T-cell (primary cell): ENCODE measurements at regions of chr22 and their contacts with region 1.

Region 1: DNA sequence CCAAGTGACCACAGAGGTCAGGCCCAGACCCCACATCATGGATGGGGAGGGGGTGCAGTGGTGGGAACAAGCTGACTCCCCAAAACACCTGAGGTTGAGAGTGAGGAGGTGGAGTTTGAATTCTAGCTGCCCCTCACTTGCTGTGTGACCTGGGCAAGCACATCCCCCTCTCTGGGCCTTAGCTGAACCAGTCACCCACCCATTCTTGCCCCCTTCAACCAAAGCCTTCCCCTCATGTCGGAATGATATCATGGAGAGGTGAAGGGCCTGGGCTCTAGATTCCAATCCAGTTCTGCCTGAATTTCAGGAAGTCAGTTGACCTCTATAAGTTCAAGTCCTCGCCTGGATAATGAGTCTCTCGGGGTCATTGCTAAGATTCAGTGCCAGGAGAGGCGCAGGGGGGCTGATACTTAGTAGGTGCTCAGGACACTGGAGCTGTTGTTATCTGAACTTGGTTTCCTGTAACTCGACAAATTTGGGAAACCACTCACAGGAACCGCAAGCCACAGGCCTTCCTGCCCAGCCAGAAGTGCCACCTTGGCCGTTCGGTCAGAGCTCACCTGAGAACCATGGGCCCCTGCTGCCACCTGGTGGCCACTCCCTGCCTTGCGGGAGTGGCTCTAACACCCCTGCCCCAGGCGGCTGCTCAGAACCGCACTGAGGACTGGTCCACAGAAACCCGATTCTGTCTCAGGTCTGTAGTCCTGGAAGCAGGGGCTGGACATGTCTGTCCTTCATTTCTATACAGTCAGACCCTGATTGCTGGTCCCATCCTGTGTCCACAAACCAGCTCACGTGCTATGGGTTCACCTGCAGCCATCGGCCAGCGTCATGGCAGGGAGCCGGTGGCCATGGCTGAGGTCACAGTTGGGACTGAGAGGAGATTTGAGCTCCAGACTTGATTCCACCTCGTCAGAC is 6.9 kb downstream of the CDC42EP1 start:
- DNase-seq: peak; percentile 68 to 93 (median 84)
- ATAC-seq: peak; percentile 87 to 93 (median 89)
- H3K4me3 ChIP-seq: peak overlapping the region in 1 of 2 donors; percentile 32
- H3K4me3 Mint-ChIP-seq: peak overlapping the region; percentile 41 to 70 (median 51)
- H3K27ac ChIP-seq: no peak overlapping the region
- H3K27ac Mint-ChIP-seq: peak overlapping the region; percentile 16 to 19
- H3K4me1 ChIP-seq: peaks cover 13 to 29% of the 10 kb centered on the region in 2 experiments
- H3K4me1 Mint-ChIP-seq: peaks cover 19 to 25% (median 24%) of the 10 kb centered on the region in 3 donors
- H3K27me3 ChIP-seq: peaks cover 0 to 65% of the 10 kb centered on the region in 2 experiments
- H3K27me3 Mint-ChIP-seq: peaks cover 6 to 25% of the 10 kb centered on the region in 2 donors

Region 2: GRCh38 chr22:37472418-37473006 is 94.7 kb before region 1 on chr22:
- CTCF ChIA-PET with region 1: interaction called, 8 to 11 read pairs
- POLR2A ChIA-PET with region 1: no interaction called
- DNase-seq: peak in 26 of 35 experiments; percentile 7 to 67 (median 32)
- ATAC-seq: peak; percentile 52 to 64 (median 55)
- H3K4me3 ChIP-seq: no peak overlapping the region
- H3K4me3 Mint-ChIP-seq: no peak overlapping the region
- H3K27ac ChIP-seq: no peak overlapping the region
- H3K27ac Mint-ChIP-seq: peak overlapping the region in 1 of 2 donors; percentile 19
- H3K4me1 ChIP-seq: peaks cover 0 to 4% of the 10 kb centered on the region in 2 experiments
- H3K4me1 Mint-ChIP-seq: peaks cover 8 to 16% (median 15%) of the 10 kb centered on the region in 3 donors
- H3K27me3 ChIP-seq: no peaks in the 10 kb centered on the region
- H3K27me3 Mint-ChIP-seq: no peaks in the 10 kb centered on the region

Region 3: GRCh38 chr22:37538590-37539357 is 28.4 kb before region 1 on chr22:
- CTCF ChIA-PET with region 1: interaction called, 9 to 59 read pairs
- POLR2A ChIA-PET with region 1: interaction called in 1 of 2 experiments, 4 read pairs
- DNase-seq: peak; percentile 75 to 93 (median 85)
- ATAC-seq: peak; percentile 99 to 100 (median 100)
- H3K4me3 ChIP-seq: no peak overlapping the region
- H3K4me3 Mint-ChIP-seq: peak overlapping the region in 1 of 3 donors; percentile 63
- H3K27ac ChIP-seq: no peak overlapping the region
- H3K27ac Mint-ChIP-seq: peak overlapping the region in 1 of 2 donors; percentile 69
- H3K4me1 ChIP-seq: peaks cover 0 to 24% of the 10 kb centered on the region in 2 experiments
- H3K4me1 Mint-ChIP-seq: peaks cover 16 to 39% (median 30%) of the 10 kb centered on the region in 3 donors
- H3K27me3 ChIP-seq: peaks cover 0 to 37% of the 10 kb centered on the region in 2 experiments
- H3K27me3 Mint-ChIP-seq: peaks cover 14 to 25% of the 10 kb centered on the region in 2 donors

Region 4: DNA sequence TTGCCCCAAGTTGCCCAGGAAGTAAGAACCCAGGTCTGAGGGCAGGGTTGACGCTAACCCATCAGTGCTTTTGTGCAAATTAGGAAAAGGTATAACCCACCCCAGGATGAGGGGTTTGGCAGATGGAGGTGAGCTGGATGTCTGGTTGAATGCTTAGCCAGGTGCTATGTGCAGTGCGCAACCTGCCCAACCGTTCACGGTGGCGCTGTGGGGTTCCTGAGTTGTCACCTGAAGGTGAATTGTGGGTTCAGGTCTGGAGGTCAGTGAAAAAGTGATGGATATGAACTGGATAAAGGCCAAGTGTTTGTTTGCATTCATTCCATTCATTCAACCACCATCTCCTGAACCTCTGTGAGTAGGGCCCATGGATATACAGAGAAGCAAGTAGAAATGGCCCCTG is 27.1 kb after region 1 on chr22:
- CTCF ChIA-PET with region 1: interaction called, 8 to 36 read pairs
- POLR2A ChIA-PET with region 1: interaction called in 1 of 2 experiments, 7 read pairs
- DNase-seq: no peak
- ATAC-seq: no peak
- H3K4me3 ChIP-seq: no peak overlapping the region
- H3K4me3 Mint-ChIP-seq: no peak overlapping the region
- H3K27ac ChIP-seq: no peak overlapping the region
- H3K27ac Mint-ChIP-seq: no peak overlapping the region
- H3K4me1 ChIP-seq: peaks cover 0 to 6% of the 10 kb centered on the region in 2 experiments
- H3K4me1 Mint-ChIP-seq: peaks cover 12 to 13% (median 12%) of the 10 kb centered on the region in 3 donors
- H3K27me3 ChIP-seq: peaks cover 0 to 5% of the 10 kb centered on the region in 2 experiments
- H3K27me3 Mint-ChIP-seq: peaks cover 0 to 2% of the 10 kb centered on the region in 2 donors

Region 5: DNA sequence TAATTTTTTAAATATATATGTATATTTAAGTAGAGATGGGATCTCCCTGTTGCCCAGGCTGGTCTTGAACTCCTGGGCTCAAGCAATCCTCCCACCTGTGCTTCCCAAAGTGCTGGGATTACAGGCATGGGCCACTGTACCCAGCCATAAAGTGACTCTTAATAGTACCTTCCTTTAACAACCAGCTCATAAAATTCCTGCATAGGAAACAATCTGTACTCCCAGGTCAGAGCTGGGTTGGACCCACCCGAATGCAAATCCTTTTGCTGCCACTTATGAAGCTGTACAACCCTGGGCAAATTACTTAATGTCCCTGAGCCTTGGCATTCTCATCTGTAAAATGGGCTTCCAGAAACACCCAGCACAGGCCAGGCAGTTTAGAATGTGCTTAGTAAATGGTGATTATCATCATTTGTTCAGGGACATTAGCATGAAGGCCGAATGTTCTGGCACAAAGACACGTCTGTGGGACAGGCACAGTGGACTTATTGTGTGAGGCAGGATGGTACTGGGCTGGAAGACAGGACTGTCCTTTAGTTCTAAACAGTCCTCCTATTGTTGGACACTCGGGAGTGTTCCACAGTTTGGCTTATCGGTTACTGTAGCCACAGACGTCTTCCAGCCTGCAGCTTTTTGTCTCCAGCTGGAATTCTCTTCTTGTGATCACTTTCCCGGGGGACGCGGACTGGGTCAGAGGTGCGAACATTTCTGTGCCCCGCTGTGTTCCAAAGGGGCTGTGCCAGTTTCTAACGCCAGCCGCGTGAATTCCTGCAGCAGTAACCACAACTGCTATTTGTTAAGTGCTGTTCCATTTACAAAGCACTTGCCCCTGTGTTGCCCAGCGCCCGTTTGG is 97.3 kb after region 1 on chr22:
- CTCF ChIA-PET with region 1: no interaction called
- POLR2A ChIA-PET with region 1: no interaction called
- DNase-seq: no peak
- ATAC-seq: no peak
- H3K4me3 ChIP-seq: no peak overlapping the region
- H3K4me3 Mint-ChIP-seq: no peak overlapping the region
- H3K27ac ChIP-seq: no peak overlapping the region
- H3K27ac Mint-ChIP-seq: no peak overlapping the region
- H3K4me1 ChIP-seq: peaks cover 8 to 24% of the 10 kb centered on the region in 2 experiments
- H3K4me1 Mint-ChIP-seq: peaks cover 27 to 33% (median 31%) of the 10 kb centered on the region in 3 donors
- H3K27me3 ChIP-seq: no peaks in the 10 kb centered on the region
- H3K27me3 Mint-ChIP-seq: no peaks in the 10 kb centered on the region